HCT116 (cell line): ENCODE measurements at regions of chr15 and their contacts with region 1.

Region 1: DNA sequence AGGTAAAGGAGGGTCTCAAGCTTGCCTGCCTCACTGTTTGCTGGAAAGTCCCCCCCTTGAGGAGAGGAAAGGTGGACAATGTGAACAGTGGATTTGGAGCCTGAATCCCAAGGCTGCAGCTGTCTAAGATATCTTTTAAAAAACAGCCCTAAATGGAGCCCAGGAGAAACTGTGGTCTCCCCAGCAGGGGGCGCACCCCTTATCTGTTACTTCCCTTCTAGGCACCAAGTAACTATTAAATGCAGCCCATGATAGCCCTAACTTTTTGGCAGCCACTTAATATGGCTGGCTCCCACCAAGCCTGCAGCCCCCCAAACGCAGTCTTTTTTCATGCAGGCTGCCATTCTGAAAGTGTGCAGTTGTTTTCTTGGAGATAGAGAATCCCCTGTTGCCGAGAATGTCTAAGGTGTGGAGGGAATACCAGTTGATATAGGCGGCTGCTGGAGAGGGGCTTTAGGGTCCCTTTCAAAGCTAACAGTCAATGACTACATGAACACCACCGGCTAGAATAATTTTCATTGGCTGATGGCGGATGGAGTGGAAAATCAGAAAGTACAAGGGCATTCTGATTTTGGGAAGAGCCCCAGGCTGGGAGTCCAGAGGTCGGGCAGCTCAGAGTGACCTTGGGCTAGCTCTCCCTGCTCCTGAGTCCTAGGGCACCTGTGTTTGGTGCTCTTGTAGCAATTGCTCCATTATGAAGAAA is 1.3 kb downstream of the RHCG start:
- DNase-seq: no peak
- ATAC-seq: peak; percentile 49
- H3K4me3 ChIP-seq: no peak overlapping the region
- H3K27ac ChIP-seq: no peak overlapping the region
- H3K4me1 ChIP-seq: peaks cover 4 to 20% of the 10 kb centered on the region in 2 experiments
- H3K27me3 ChIP-seq: no peaks in the 10 kb centered on the region
- CTCF ChIP-seq: peak; percentile 53 to 74 (median 72)
- POLR2A ChIP-seq: no peak
- RAD21 ChIP-seq: peak; percentile 46; the same call in 1 of the 2 replicates

Region 2: DNA sequence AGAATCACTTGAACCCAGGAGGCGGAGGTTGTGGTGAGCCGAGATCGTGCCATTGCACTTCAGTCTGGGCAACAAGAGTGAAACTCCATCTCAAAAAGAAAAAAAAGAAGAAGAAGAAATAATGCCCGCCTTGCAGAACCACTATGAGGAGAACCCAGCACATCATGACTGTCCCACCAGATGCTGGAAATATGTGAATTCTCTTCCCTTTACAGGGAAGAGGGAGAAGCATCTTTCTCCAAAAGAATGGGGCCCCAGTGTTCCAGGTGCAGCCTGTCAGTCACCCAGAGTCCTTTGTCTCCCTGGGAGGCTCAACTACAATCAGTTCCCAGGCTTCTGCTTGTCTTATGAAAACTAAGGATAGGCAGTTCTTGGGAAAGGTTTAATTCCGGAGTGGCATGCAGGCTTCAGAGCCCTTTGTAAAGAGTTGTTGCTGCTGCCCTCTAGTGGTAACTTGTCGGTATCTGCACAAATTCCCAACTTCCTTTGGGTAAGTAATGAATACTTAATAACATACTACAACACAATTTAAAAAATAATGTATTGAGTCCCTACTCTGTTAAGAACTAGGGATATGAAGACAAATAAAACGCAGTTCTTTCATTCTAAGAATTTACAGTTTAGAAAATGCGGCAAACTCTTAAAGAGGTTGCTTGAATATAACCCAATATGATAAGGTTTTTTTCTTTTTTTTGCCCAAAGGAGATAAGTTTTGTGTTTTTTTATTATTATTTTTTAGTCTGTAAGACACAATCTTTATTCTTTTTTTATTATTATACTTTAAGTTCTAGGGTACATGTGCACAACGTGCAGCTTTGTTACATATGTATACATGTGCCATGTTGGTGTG is 61.6 kb after region 1 on chr15:
- CTCF ChIA-PET with region 1: interaction called, 7 read pairs
- POLR2A ChIA-PET with region 1: no interaction called
- RAD21 ChIA-PET with region 1: no interaction called
- intact Hi-C with region 1: loop called (anchors 1 kb)
- DNase-seq: peak; percentile 70
- ATAC-seq: peak; percentile 83
- H3K4me3 ChIP-seq: no peak overlapping the region
- H3K27ac ChIP-seq: no peak overlapping the region
- H3K4me1 ChIP-seq: peaks cover 0 to 5% of the 10 kb centered on the region in 2 experiments; a peak in 2 of 4 replicates
- H3K27me3 ChIP-seq: no peaks in the 10 kb centered on the region
- CTCF ChIP-seq: peak; percentile 72 to 87 (median 82); a peak in 5 of 6 replicates
- POLR2A ChIP-seq: no peak
- RAD21 ChIP-seq: peak; percentile 76